Transverse colon (tissue), 4 donors: ENCODE measurements at regions of chr18 and their contacts with region 1.

Region 1: DNA sequence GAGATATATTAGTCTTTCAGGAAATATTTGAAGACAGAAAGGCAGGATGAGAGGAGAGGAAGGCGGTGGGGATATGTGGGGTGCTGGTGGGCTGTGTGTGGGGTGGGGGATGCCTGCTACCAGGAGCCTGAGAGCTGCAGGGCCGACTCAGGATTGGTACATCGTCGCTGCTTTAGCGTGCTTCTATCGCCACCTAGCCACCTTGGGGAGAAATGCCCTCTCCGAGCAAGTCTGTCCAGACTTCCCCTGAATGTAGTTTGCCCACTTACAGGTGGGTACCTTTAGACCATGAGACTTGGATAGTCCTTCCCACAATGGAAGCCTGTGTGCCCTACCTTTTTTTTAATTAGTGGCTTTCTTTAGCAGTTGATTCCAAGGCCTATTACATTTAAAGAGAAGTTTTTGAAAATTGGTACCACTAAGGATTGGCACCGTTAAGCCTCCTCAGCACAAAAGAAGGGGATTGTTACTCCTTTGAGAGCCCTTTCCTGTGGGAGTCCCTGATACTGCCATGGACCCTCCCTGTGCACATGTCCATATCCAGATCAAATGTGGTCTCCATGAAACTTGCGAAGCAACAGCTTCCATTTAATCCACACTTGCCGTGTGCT is 114.1 kb upstream of the NDUFV2 start:
- DNase-seq: peak; percentile 57
- H3K4me3 ChIP-seq: no peak overlapping the region
- H3K27ac ChIP-seq: peak overlapping the region in 2 of 4 donors; percentile 38 to 49
- H3K4me1 ChIP-seq: no peaks in the 10 kb centered on the region
- H3K27me3 ChIP-seq: peaks cover 2% of the 10 kb centered on the region
- CTCF ChIP-seq: peak; percentile 68 to 79 (median 70)
- EP300 ChIP-seq: no peak
- POLR2A ChIP-seq: no peak

Region 2: DNA sequence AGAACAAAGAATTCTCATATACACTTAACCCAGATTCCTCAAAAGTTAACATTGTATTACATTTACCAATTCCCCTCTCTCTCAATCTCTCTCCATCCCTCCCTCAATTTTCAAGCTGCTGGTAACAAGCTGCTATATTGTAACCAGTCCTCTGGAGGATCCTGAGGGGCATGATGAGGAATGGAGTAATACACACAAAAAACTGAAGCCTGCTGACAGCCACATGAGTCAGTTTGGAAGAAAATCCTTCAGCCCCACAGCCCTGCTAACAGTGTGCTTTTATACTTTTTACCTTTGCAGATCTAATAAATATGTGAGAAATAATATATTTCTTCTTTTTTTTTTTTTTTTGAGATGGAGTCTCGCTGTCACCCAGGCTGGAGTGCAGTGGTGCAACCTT is 544.9 kb before region 1 on chr18:
- in situ Hi-C with region 1: no loop called
- intact Hi-C with region 1: no loop called
- DNase-seq: no peak
- H3K4me3 ChIP-seq: no peak overlapping the region
- H3K27ac ChIP-seq: no peak overlapping the region
- H3K4me1 ChIP-seq: no peaks in the 10 kb centered on the region
- H3K27me3 ChIP-seq: no peaks in the 10 kb centered on the region
- CTCF ChIP-seq: no peak
- EP300 ChIP-seq: no peak
- POLR2A ChIP-seq: no peak

Region 3: GRCh38 chr18:8478166-8478967 is 510.0 kb before region 1 on chr18:
- in situ Hi-C with region 1: loop called in 3 of 4 experiments (anchors 25 kb)
- intact Hi-C with region 1: no loop called
- DNase-seq: peak; percentile 57
- H3K4me3 ChIP-seq: no peak overlapping the region
- H3K27ac ChIP-seq: no peak overlapping the region
- H3K4me1 ChIP-seq: no peaks in the 10 kb centered on the region
- H3K27me3 ChIP-seq: no peaks in the 10 kb centered on the region
- CTCF ChIP-seq: peak; percentile 59 to 81 (median 75)
- EP300 ChIP-seq: no peak
- POLR2A ChIP-seq: no peak

Region 4: DNA sequence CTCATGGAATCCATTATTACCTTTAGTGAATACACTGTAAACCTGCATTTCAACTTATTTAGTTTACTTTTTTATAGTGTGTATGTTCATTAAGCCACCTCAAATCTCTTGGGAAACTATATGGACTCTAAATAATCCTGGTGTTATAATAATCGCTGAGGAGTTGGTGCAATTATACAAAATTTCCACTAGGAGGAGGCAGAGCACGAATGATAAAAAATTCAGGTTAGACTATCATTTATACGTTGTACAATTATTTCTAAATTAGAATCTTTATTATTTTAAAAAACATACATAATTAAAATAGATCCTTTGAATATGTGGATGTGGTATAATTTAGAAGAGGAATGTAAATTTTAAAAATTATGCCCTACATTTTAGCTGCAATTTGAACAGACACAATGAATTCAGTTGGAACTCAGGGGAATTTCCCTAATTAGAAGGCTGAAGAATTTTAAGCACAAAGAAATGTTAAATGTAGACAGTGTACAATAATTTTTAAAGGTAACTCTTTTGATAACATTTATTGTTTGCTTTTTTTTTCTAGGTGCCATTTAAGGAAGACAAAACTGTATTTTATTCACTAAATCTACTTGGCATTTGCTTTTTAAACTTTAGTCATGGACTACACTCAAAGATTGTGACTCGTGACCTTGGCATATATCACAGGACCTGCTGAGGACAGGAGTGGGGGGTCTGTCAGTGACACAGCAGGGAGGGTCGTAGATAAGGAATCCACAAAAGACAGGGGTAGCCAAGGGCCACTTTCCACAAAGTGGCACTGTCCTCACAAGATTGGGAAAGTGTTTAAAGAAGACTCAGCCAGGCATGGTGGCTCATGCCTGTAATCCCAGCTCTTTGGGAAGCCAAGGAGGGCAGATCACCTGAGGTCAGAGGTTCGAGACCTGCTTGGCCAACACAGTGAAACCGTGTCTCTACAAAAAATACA is 333.6 kb before region 1 on chr18:
- in situ Hi-C with region 1: loop called in 3 of 4 experiments (anchors 10 kb)
- intact Hi-C with region 1: loop called (anchors 5 kb)
- DNase-seq: no peak
- H3K4me3 ChIP-seq: no peak overlapping the region
- H3K27ac ChIP-seq: no peak overlapping the region
- H3K4me1 ChIP-seq: no peaks in the 10 kb centered on the region
- H3K27me3 ChIP-seq: no peaks in the 10 kb centered on the region
- CTCF ChIP-seq: peak; percentile 72 to 88 (median 80)
- EP300 ChIP-seq: no peak
- POLR2A ChIP-seq: no peak

Region 5: DNA sequence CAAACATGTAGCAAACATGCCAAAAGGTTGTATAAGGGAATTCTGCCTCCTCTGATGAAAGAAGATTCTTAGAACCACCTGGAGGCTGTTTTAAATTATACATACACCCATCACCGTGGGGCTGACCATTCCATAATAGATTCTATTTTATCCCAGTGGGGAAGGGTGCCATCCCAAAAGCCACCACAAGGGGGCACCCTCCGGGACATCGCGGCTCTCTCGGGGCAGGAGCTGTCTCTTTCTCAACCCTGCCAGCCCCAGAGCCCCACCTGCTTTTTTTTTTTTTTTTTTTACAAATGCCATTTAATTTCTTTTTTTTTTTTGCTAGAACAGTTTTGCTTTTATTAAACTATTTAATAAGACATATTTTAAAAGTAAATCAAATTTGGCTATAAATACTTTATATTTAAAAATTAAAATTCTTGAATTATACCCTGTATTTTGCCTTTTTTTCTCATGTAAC is 291.6 kb before region 1 on chr18:
- in situ Hi-C with region 1: loop called in 3 of 4 experiments (anchors 10 to 25 kb)
- intact Hi-C with region 1: loop called (anchors 5 kb)
- DNase-seq: peak; percentile 79
- H3K4me3 ChIP-seq: no peak overlapping the region
- H3K27ac ChIP-seq: no peak overlapping the region
- H3K4me1 ChIP-seq: peaks cover 0 to 5% (median 0%) of the 10 kb centered on the region in 4 donors
- H3K27me3 ChIP-seq: peaks cover 35% of the 10 kb centered on the region
- CTCF ChIP-seq: peak; percentile 88 to 96 (median 95)
- EP300 ChIP-seq: no peak
- POLR2A ChIP-seq: no peak

Region 6: DNA sequence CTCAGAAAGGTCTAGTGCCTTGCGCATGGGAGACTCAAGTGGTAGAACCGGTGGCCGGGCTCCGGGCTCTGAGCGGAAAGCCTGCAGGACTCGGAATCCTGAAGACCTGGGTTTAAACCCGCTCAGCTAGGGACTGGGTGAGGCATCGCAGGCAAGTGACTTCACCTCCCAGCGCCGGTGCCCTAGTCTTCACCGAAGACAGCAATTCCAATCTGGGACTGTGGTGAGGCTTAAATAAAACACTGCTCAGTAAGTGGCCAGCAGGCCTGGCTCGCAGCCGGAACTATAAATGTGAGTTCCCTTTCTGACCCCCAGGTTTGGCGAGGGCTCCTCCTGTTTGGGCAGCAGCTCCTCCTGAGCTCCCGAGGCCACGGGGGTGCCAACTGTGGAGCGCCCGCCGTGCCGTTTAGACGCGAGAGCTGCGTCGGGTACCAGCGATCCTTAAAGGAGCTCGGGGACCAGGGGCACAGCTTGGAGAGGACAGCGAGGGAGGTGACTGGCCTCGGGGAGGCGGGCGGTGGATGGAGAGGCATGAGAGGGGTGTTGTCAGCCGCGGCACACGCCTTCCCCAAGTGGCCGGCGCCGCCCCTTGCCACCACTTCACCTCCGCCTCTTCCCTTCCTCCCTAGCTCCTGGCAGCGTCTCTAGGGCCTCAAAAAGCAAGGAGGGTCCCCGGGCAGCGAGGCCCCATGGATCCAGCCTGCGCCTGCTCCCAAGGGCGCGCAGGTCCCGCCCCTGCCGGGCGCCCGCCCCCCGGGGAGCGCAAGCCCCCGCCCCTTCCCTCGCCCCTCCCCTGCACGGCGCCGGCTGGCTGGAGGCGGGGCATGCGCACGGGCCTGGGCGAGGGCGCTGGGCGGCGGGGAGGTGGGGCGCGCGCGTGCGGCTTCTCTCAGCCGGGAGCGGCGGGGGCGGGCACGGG is 283.7 kb before region 1 on chr18:
- in situ Hi-C with region 1: loop called in 3 of 4 experiments (anchors 10 to 25 kb)
- intact Hi-C with region 1: loop called (anchors 5 kb)
- DNase-seq: peak; percentile 89
- H3K4me3 ChIP-seq: peak overlapping the region; percentile 38 to 61 (median 54)
- H3K27ac ChIP-seq: peak overlapping the region; percentile 75 to 89 (median 88)
- H3K4me1 ChIP-seq: peaks cover 0 to 26% (median 8%) of the 10 kb centered on the region in 4 donors
- H3K27me3 ChIP-seq: peaks cover 86% of the 10 kb centered on the region
- CTCF ChIP-seq: peak in 1 of 5 experiments; percentile 11
- EP300 ChIP-seq: no peak
- POLR2A ChIP-seq: peak; percentile 36